Right lobe of liver (tissue), 6 donors: ENCODE measurements at regions of chr2 and their contacts with region 1.

Region 1: GRCh38 chr2:62415019-62415431 is 91.0 kb downstream of the TMEM17 start:
- DNase-seq: no peak
- ATAC-seq: peak; percentile 49 to 65 (median 60)
- H3K4me3 ChIP-seq: no peak overlapping the region
- H3K27ac ChIP-seq: peak overlapping the region in 1 of 3 donors; percentile 21
- H3K4me1 ChIP-seq: peaks cover 0 to 20% (median 8%) of the 10 kb centered on the region in 4 donors
- H3K27me3 ChIP-seq: no peaks in the 10 kb centered on the region
- CTCF ChIP-seq: no peak
- POLR2A ChIP-seq: no peak

Region 2: GRCh38 chr2:61910603-61911002 is 504.4 kb before region 1 on chr2:
- intact Hi-C with region 1: loop called in 1 of 2 experiments (anchors 10 kb)
- DNase-seq: no peak
- ATAC-seq: peak; percentile 37 to 52 (median 38)
- H3K4me3 ChIP-seq: no peak overlapping the region
- H3K27ac ChIP-seq: no peak overlapping the region
- H3K4me1 ChIP-seq: peaks cover 0 to 23% (median 0%) of the 10 kb centered on the region in 4 donors
- H3K27me3 ChIP-seq: no peaks in the 10 kb centered on the region
- CTCF ChIP-seq: peak; percentile 20 to 39 (median 28)
- POLR2A ChIP-seq: no peak

Region 3: DNA sequence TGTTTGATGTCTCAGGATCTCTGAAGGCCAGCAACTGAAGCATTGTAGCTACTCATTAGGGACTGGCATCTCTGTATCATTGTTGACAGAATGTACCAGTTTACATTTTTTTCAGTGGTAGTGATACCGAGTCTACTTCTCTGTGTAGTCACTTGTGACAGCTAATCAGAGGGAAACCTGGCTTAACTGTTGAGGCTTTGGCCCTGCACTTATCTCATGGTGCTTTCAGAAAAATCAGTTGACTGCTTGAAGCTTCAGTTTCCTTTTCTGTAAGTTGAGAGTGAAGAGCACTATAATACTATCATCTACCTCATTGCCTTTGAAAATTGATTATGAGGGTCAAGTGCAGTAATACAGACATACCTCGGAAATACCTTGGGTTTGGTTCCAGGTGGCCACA is 419.5 kb before region 1 on chr2:
- intact Hi-C with region 1: loop called in 1 of 2 experiments (anchors 5 kb)
- DNase-seq: no peak
- ATAC-seq: no peak
- H3K4me3 ChIP-seq: no peak overlapping the region
- H3K27ac ChIP-seq: no peak overlapping the region
- H3K4me1 ChIP-seq: no peaks in the 10 kb centered on the region
- H3K27me3 ChIP-seq: no peaks in the 10 kb centered on the region
- CTCF ChIP-seq: no peak
- POLR2A ChIP-seq: no peak